B cell (primary cell): ENCODE measurements at regions of chr5 and their contacts with region 1.

Region 1: GRCh38 chr5:77645158-77645994 is 6.9 kb upstream of the OTP start:
- DNase-seq: peak; percentile 76
- ATAC-seq: peak; percentile 82
- H3K4me3 ChIP-seq: peak overlapping the region in 3 of 5 experiments; percentile 32 to 62 (median 51)
- H3K4me3 Mint-ChIP-seq: peak overlapping the region; percentile 82
- H3K27ac ChIP-seq: no peak overlapping the region
- H3K27ac Mint-ChIP-seq: no peak overlapping the region
- H3K4me1 ChIP-seq: peaks cover 28 to 50% of the 10 kb centered on the region in 2 donors
- H3K4me1 Mint-ChIP-seq: peaks cover 17% of the 10 kb centered on the region
- H3K27me3 ChIP-seq: peaks cover 2 to 89% (median 68%) of the 10 kb centered on the region in 4 experiments
- H3K27me3 Mint-ChIP-seq: peaks cover 88% of the 10 kb centered on the region
- CTCF ChIP-seq: peak; percentile 63

Region 2: DNA sequence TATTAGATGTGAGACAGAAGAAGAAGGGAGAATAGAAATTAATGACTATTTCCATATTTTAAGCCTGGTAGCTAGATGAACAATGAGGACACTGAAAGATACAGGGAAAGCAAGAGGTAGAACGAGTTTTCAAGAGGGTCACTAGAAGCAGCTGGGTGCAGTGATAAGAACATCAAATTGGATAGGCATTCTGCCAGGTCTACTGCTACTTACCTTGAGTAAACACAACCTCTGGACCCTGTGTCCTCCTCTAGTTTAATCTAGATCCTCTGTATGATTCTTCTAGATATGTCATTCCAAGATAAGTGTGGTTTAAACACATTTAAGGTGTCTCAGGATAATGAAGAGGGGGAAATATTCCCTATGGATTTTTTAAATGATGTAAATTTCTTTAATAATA is 38.1 kb before region 1 on chr5:
- CTCF ChIA-PET with region 1: no interaction called
- POLR2A ChIA-PET with region 1: no interaction called
- intact Hi-C with region 1: no loop called
- DNase-seq: no peak
- ATAC-seq: no peak
- H3K4me3 ChIP-seq: no peak overlapping the region
- H3K4me3 Mint-ChIP-seq: no peak overlapping the region
- H3K27ac ChIP-seq: no peak overlapping the region
- H3K27ac Mint-ChIP-seq: no peak overlapping the region
- H3K4me1 ChIP-seq: no peaks in the 10 kb centered on the region
- H3K4me1 Mint-ChIP-seq: no peaks in the 10 kb centered on the region
- H3K27me3 ChIP-seq: peaks cover 0 to 14% (median 6%) of the 10 kb centered on the region in 4 experiments
- H3K27me3 Mint-ChIP-seq: peaks cover 49% of the 10 kb centered on the region
- CTCF ChIP-seq: no peak

Region 3: DNA sequence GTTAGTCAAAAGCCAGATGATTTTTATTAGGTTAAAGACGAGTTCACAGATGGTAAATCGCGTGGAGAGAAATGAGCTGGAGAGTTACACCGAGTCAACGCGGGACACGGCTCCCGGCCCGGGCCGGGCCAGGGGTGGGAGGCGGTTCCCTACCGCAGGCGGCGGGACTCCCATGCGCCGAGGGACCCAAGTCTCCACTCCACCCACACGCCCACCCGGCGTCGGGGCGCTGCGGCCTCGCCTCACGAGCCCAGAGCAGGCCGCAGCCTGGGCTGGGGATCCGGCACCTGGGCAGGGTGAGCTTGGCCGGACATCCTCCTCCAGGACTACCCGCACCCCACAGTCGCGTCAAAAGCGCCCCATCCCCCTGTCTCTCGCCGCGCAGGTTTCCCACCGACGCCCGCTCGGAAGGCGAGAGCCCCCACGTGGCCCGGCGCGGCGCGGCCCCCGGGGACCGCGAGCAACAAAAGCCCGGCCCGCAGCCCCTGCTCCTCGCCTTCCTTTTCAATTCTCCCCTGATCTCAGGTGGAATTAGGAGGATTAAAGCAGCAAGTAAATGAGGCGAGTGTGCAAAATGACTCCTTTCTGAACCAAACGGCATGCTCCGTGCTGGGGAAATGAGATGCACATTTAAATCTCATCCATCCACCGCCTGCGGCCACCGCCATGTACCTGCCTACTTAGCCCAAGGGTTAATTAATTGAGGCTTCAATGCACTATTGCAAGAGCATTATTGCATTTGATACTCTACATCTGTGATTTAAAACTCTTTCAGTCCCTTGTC is 327.3 kb after region 1 on chr5:
- CTCF ChIA-PET with region 1: no interaction called
- POLR2A ChIA-PET with region 1: no interaction called
- intact Hi-C with region 1: loop called (anchors 5 kb)
- DNase-seq: peak; percentile 64
- ATAC-seq: peak; percentile 84
- H3K4me3 ChIP-seq: peak overlapping the region; percentile 36 to 62 (median 51)
- H3K4me3 Mint-ChIP-seq: peak overlapping the region; percentile 81
- H3K27ac ChIP-seq: no peak overlapping the region
- H3K27ac Mint-ChIP-seq: no peak overlapping the region
- H3K4me1 ChIP-seq: peaks cover 17% of the 10 kb centered on the region in 2 donors
- H3K4me1 Mint-ChIP-seq: peaks cover 16% of the 10 kb centered on the region
- H3K27me3 ChIP-seq: peaks cover 0 to 50% (median 38%) of the 10 kb centered on the region in 4 experiments
- H3K27me3 Mint-ChIP-seq: peaks cover 62% of the 10 kb centered on the region
- CTCF ChIP-seq: peak; percentile 43

Region 4: DNA sequence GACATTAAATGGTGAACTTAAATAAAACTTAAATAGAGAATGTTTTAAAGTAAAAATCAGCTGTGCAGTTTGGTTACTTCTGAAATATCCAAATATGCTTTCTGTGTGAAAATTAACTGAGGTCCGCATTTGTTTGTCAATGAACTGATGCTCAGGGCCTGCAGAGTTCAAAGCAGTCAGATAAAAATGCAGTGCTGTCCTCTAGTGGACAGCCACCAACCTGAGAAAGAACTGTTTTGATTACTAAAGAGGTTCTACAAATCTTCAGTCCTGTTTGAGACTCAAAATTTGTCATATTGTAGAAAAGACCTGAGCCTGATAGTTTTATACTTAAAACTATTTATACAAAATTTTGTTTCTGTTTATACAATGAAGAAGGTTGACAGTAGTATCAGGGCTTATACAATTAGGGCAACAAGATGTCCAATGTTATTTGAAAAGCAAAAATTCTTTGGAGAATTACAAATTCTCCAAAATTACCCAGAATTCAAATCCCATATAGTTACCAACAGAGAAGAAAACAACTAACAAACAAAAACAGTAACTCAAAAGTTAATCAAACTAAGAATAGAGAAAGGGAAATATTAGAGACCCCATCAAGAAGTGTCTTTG is 363.1 kb after region 1 on chr5:
- CTCF ChIA-PET with region 1: no interaction called
- POLR2A ChIA-PET with region 1: no interaction called
- intact Hi-C with region 1: loop called (anchors 5 kb)
- DNase-seq: peak; percentile 35
- ATAC-seq: no peak
- H3K4me3 ChIP-seq: no peak overlapping the region
- H3K4me3 Mint-ChIP-seq: no peak overlapping the region
- H3K27ac ChIP-seq: no peak overlapping the region
- H3K27ac Mint-ChIP-seq: no peak overlapping the region
- H3K4me1 ChIP-seq: no peaks in the 10 kb centered on the region
- H3K4me1 Mint-ChIP-seq: peaks cover 7% of the 10 kb centered on the region
- H3K27me3 ChIP-seq: no peaks in the 10 kb centered on the region
- H3K27me3 Mint-ChIP-seq: no peaks in the 10 kb centered on the region
- CTCF ChIP-seq: peak; percentile 72